ENCODE measurements at regions of chr1 and their contacts with region 1.

Region 1: DNA sequence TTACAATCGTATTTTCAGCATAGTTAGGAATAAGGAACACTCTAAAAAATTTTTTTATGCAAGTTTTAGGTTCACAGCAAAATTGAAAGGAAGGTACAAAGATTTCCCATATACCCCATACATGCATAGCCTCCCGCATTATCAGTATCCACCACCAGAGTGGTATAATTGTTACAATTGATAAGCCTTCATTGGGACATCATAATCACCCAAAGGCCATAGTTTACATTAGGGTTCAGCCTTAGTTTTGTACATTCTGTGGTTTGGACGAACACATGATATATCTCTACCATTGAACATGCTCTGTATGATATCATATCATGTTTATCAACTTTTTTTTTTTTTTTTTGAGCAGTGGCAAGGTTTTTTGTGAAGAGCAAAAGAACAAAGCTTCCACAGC is 180.0 kb downstream of the SDCCAG8 start:
- DNase-seq: no peak
- ATAC-seq: no peak
- H3K4me3 ChIP-seq: no peak overlapping the region
- H3K27ac ChIP-seq: no peak overlapping the region
- H3K4me1 ChIP-seq: no peaks in the 10 kb centered on the region; the same call in none of the 2 replicates
- H3K27me3 ChIP-seq: no peaks in the 10 kb centered on the region
- CTCF ChIP-seq: no peak

Region 2: GRCh38 chr1:243447347-243447746 is 11.5 kb after region 1 on chr1:
- CTCF ChIA-PET with region 1: no interaction called
- POLR2A ChIA-PET with region 1: no interaction called
- in situ Hi-C with region 1: no loop called
- intact Hi-C with region 1: no loop called
- DNase-seq: no peak
- ATAC-seq: no peak
- H3K4me3 ChIP-seq: no peak overlapping the region
- H3K27ac ChIP-seq: no peak overlapping the region
- H3K4me1 ChIP-seq: no peaks in the 10 kb centered on the region
- H3K27me3 ChIP-seq: no peaks in the 10 kb centered on the region
- CTCF ChIP-seq: no peak

Region 3: DNA sequence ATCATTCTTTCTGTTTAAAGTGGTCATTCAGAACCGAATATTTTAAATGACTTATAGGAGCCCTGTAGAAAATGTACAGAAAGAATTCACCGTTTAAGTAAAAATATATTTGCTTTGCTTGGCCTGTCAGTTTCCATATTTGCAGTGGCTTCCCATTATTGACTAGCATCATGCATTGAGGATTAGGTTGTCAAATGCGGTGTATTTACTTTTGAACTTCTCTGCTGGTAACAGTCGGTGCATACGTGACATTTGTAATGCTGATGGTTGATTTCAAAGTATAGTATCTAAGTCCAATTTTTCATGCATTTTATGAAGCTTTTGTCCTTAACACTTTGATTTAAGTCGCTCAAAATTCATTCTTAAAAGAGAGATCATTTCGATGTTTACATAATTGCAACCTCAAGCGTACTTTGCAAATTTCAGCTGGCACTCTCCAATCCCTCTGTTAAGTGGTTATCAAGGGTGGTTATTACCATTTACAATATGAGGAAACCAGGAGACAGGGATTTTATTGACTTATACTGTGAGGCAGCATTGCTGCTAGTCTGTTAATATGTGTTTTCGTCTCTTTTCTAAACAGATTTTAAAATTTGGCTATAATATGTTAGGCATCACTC is 21.6 kb after region 1 on chr1:
- CTCF ChIA-PET with region 1: no interaction called
- POLR2A ChIA-PET with region 1: no interaction called
- in situ Hi-C with region 1: no loop called
- intact Hi-C with region 1: no loop called
- DNase-seq: no peak
- ATAC-seq: no peak
- H3K4me3 ChIP-seq: no peak overlapping the region
- H3K27ac ChIP-seq: no peak overlapping the region
- H3K4me1 ChIP-seq: no peaks in the 10 kb centered on the region
- H3K27me3 ChIP-seq: no peaks in the 10 kb centered on the region
- CTCF ChIP-seq: no peak

Region 4: DNA sequence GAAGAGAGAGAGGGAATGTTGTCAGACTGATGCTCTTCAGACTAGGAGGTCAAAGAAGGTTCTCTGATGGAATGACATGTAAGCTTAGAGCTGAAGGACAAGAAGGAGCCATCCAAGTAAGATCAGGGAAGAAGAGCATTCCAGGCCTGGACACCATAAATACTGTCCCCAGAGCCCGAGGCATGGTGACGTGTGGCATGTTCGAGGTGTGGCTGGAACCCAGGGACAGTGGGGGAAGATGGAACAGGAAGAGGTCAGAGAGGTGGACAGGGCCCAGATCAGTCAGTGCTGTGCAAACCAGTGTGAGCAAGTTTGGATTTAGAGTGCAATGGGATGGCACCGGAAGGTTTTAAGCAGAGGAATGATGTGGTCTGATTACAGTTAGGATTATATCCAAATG is 74.6 kb after region 1 on chr1:
- CTCF ChIA-PET with region 1: interaction called, 3 read pairs
- POLR2A ChIA-PET with region 1: interaction called, 5 read pairs
- in situ Hi-C with region 1: no loop called
- intact Hi-C with region 1: loop called (anchors 2 kb)
- DNase-seq: no peak
- ATAC-seq: no peak
- H3K4me3 ChIP-seq: no peak overlapping the region
- H3K27ac ChIP-seq: no peak overlapping the region
- H3K4me1 ChIP-seq: no peaks in the 10 kb centered on the region
- H3K27me3 ChIP-seq: no peaks in the 10 kb centered on the region
- CTCF ChIP-seq: no peak

Region 5: DNA sequence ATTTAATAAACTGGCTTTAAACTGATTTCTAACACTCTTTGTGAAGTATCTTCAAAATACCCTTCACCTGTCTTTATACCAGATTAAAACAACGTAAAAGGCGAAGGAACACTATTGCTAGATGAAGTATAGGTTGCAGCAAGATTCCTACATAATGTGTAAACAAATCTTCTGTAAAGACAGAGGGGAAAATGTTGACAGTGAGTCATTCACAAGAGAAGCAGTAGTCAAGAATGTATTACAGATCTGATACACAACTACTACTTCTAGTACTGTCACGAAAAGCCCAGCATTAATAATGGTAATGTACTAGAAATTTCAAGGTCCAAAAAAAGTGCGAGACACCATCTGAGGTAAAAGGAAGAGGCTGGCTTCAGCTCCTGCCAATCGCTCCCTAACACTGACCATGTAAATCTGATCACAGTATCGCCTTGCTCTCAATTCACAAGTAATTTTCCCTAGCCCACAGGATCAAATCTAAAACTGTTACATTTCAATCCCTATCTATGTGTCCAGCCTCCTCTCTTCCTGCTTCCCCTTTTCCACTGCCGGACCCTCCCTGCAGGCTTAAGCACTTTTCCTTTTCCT is 123.8 kb after region 1 on chr1:
- CTCF ChIA-PET with region 1: no interaction called
- POLR2A ChIA-PET with region 1: no interaction called
- in situ Hi-C with region 1: no loop called
- intact Hi-C with region 1: no loop called
- DNase-seq: peak; percentile 25
- ATAC-seq: peak; percentile 77
- H3K4me3 ChIP-seq: no peak overlapping the region
- H3K27ac ChIP-seq: no peak overlapping the region
- H3K4me1 ChIP-seq: peaks cover 3% of the 10 kb centered on the region; the same call in 1 of the 2 replicates
- H3K27me3 ChIP-seq: no peaks in the 10 kb centered on the region
- CTCF ChIP-seq: no peak